Activated T-helper 1 cell treated with anti-CD3 and anti-CD28 coated beads, Interleukin-12 subunit alpha, Interleukin-12 subunit beta, Interleukin-2, Interleukin-4 antibody, amounts not matched to agents 30 ng/mL and 10 ng/mL and 1 ng/mL, durations not matched to agents 14 hours and 24 hours and 36 hours (primary cell): ENCODE measurements at regions of chr12 and their contacts with region 1.

Region 1: GRCh38 chr12:7108796-7109571 is at the start of gene C1RL:
- DNase-seq: peak; percentile 71
- H3K4me3 Mint-ChIP-seq: peak within 1 kb of the TSS; percentile 94
- H3K27ac Mint-ChIP-seq: peak within 1 kb of the TSS; percentile 91
- H3K4me1 Mint-ChIP-seq: peaks cover 55% of the 10 kb centered on the region
- H3K27me3 Mint-ChIP-seq: no peaks in the 10 kb centered on the region
- total RNA-seq, gene C1RL: 21.5 and 21.8 TPM in 2 replicates

Region 2: DNA sequence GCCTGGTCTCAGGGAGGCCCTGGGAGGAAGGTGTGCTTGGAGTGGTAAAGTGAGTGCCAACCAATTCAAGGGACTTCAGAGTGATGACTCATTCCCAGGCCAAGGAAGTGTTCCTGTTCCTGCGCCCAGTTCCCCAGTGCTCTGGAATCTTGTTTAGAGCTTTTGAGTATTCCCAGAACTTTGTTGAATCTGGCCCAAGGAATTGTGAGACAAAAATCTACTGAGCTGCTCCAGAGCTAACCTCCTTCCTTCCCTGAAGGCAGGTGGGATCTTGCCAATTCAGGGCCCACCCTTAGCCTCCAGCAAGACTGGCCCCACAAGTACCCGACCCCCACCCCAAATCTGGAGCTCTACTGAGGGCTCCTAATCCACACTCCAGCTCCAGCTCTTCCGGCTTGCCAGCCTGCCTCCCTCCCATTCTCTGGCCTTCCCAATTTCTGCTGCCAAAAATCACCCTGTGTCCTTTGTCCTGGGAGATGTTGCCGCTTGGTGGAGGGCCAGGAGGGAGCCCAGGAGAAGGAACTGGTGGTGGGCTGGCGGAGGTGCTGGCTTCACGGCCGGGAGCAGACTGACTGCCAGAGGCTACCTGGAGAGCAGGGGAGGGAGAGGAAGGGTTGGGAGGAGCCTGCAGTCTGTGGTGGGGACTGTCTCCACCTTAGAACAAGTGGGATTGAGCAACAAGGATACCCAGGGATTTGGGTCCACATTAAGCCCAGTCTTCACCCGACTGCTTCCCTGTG is 183.3 kb before region 1 on chr12:
- intact Hi-C with region 1: loop called (anchors 1 kb)
- DNase-seq: no peak
- H3K4me3 Mint-ChIP-seq: peak overlapping the region; percentile 91
- H3K27ac Mint-ChIP-seq: peak overlapping the region; percentile 94
- H3K4me1 Mint-ChIP-seq: peaks cover 44% of the 10 kb centered on the region
- H3K27me3 Mint-ChIP-seq: peaks cover 3% of the 10 kb centered on the region

Region 3: DNA sequence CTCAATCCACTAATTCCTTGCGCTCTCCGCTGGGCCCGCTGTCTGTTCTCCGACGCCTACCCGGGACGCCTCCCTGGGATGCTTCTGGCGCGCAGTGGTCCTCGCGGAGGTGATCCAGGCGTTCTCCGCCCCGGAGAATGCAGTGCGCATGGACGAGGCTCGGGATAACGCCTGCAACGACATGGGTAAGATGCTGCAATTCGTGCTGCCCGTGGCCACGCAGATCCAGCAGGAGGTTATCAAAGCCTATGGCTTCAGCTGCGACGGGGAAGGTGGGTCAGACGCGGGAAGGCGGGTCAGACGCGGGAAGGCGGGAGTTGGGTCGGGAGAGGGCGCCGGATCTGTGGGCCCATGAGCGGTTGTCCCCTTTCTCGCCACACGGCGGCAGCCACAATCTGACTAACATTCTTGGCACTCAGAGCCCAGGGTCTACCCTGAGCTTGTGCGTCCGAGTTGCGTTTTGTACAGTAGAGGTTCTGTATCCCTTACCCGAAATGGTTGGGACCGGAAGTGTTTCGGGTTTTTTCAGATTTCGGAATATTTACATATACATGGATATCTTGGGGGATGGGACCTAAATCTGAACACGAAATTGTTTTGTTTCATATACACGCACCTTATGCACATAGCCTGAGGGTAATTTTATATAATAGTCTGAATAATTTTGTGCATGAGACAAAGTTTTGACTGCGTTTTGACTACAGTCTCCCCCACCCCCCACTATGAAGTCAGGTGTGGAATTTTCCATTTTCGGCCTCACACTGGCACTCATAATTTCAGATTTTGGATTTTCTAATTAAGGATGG is 164.4 kb before region 1 on chr12:
- intact Hi-C with region 1: loop called (anchors 1 kb)
- DNase-seq: peak; percentile 84
- H3K4me3 Mint-ChIP-seq: peak overlapping the region; percentile 96
- H3K27ac Mint-ChIP-seq: peak overlapping the region; percentile 95
- H3K4me1 Mint-ChIP-seq: peaks cover 71% of the 10 kb centered on the region
- H3K27me3 Mint-ChIP-seq: no peaks in the 10 kb centered on the region

Region 4: DNA sequence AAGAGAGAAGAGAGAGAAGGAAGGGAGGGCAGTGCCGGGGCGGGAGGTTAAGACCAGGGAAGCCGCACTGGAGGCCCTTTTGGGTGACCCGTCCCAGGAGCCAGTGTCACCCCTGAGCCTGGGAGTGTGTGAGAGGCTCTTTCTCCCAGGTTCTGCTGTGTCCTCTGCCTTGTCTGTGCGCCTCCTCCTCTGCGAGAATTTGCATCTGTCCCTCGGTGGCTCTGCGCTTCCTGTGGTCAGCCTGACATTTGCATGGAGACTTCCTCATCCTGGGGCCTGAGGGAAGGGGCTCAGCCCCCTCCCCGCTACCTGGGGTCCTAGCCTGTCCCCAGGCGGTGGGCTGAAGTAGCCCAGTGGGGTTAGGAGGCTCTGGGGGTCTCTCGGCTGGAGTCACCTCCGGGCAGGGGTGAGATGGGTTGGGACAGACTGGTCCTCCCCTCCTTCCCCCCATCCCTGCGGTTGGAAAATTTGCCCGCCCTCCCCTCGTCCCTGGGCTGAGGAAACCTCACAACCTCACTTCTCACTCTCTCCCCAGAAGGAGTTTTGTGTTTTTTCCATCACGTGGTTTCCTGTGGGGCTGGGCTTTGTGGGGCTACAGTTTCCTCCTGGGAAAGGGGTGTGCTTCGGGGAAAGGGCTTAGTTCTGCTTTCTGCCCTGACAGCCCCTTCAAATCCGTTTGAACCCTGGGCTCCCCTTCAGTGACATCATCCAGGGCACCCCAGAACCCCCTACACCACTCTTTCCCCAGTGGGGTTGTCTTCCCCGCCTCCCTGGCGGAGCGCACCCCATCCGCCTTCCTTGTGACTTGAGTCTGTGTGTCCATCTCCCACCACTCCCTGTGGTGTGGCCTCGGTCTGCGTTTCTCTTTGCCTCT is 155.3 kb before region 1 on chr12:
- intact Hi-C with region 1: loop called (anchors 2 kb)
- DNase-seq: peak; percentile 79
- H3K4me3 Mint-ChIP-seq: peak overlapping the region; percentile 98
- H3K27ac Mint-ChIP-seq: peak overlapping the region; percentile 97
- H3K4me1 Mint-ChIP-seq: peaks cover 80% of the 10 kb centered on the region
- H3K27me3 Mint-ChIP-seq: no peaks in the 10 kb centered on the region

Region 5: GRCh38 chr12:7092229-7092985 is 16.6 kb before region 1 on chr12 and contains the start of gene C1R:
- intact Hi-C with region 1: loop called (anchors 1 kb)
- DNase-seq: peak; percentile 51
- H3K4me3 Mint-ChIP-seq: peak within 1 kb of the TSS; percentile 80
- H3K27ac Mint-ChIP-seq: peak within 1 kb of the TSS; percentile 0
- H3K4me1 Mint-ChIP-seq: peaks cover 8% of the 10 kb centered on the region
- H3K27me3 Mint-ChIP-seq: peaks cover 6% of the 10 kb centered on the region
- total RNA-seq, gene C1R: 1.7 and 2.0 TPM in 2 replicates

Region 6: GRCh38 chr12:7129872-7130680 is 21.1 kb after region 1 on chr12 and contains the start of gene CLSTN3:
- intact Hi-C with region 1: loop called (anchors 1 kb)
- DNase-seq: peak; percentile 84
- H3K4me3 Mint-ChIP-seq: peak within 1 kb of the TSS; percentile 96
- H3K27ac Mint-ChIP-seq: peak within 1 kb of the TSS; percentile 91
- H3K4me1 Mint-ChIP-seq: peaks cover 37% of the 10 kb centered on the region
- H3K27me3 Mint-ChIP-seq: no peaks in the 10 kb centered on the region
- total RNA-seq, gene CLSTN3: 48.5 and 50.8 TPM in 2 replicates

Region 7: DNA sequence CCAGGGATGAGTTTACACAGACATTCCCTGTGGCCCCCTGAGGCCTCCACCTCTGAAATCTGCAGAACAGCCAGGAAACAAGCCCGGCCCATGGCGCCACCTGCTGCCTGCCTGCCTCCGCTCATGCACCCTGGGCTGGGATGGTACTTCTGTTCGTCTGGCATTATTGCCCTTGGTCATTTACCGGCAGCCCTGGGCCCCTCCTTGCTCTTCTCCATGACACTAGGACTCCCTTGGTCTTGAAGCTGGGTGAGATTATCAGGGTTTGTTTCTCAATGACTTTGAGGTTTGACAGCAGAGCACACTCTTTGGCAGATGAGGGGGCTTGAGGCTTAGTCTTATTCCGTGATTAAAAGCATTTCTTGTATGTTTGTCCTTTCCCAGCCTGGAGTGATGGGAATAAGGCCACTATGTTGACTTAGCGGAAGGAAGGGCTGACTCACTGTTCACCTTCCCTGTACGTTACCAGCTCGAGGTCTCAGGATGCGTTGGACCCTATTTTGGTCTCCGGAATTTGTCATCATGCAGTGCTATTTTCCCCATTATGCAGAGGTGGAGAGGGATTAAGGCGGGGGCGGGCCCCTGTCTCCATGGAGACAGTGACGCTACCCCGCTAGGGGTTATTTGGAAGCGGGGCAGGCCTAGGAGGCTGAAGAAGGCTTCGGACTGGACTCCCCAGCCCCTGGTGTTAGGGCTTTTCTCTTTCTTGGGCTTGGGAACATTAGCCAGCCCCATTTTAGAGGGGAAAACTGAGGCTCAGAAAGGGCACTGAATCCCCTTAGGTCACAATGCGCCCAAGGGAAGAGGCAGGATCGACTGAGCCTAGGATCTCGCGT is 79.8 kb after region 1 on chr12:
- intact Hi-C with region 1: loop called (anchors 2 kb)
- DNase-seq: peak; percentile 49
- H3K4me3 Mint-ChIP-seq: peak overlapping the region; percentile 93
- H3K27ac Mint-ChIP-seq: peak overlapping the region; percentile 98
- H3K4me1 Mint-ChIP-seq: peaks cover 31% of the 10 kb centered on the region
- H3K27me3 Mint-ChIP-seq: peaks cover 4% of the 10 kb centered on the region

Region 8: DNA sequence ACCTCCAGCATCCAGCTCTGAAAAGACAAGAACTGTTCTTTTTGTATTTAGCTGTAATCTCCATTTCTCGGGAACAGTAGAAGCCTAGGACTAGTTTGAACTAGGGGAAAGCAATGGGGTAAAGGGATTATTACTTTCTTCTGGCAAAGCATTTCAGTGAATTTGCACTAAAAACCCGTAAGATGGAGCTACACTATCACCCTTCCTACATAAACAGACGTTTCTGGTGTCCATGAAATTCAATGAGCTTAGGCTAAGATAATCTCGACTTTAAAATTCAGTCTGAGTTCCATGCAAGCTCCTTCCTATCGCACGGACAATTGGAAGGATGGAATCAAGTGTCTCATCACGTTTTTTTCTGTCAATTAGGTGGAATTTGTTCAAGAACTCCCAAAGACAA is 218.9 kb after region 1 on chr12:
- intact Hi-C with region 1: no loop called
- DNase-seq: no peak
- H3K4me3 Mint-ChIP-seq: no peak overlapping the region
- H3K27ac Mint-ChIP-seq: no peak overlapping the region
- H3K4me1 Mint-ChIP-seq: peaks cover 5% of the 10 kb centered on the region
- H3K27me3 Mint-ChIP-seq: peaks cover 2% of the 10 kb centered on the region